GM10248 (cell line): ENCODE measurements at regions of chr12 and their contacts with region 1.

Region 1: GRCh38 chr12:132649206-132649934 is 30.8 kb downstream of the P2RX2 start:
- DNase-seq: no peak
- CTCF ChIP-seq: no peak

Region 2: GRCh38 chr12:132638541-132639418 is 10.6 kb before region 1 on chr12:
- CTCF ChIA-PET with region 1: interaction called, 11 read pairs
- POLR2A ChIA-PET with region 1: no interaction called
- DNase-seq: peak; percentile 54
- CTCF ChIP-seq: peak; percentile 66